RWPE1 (cell line): ENCODE measurements at regions of chr4 and their contacts with region 1.

Region 1: GRCh38 chr4:138775890-138776289 is 239.7 kb upstream of the NOCT start:
- DNase-seq: no peak
- H3K27ac ChIP-seq: no peak overlapping the region
- CTCF ChIP-seq: no peak

Region 2: DNA sequence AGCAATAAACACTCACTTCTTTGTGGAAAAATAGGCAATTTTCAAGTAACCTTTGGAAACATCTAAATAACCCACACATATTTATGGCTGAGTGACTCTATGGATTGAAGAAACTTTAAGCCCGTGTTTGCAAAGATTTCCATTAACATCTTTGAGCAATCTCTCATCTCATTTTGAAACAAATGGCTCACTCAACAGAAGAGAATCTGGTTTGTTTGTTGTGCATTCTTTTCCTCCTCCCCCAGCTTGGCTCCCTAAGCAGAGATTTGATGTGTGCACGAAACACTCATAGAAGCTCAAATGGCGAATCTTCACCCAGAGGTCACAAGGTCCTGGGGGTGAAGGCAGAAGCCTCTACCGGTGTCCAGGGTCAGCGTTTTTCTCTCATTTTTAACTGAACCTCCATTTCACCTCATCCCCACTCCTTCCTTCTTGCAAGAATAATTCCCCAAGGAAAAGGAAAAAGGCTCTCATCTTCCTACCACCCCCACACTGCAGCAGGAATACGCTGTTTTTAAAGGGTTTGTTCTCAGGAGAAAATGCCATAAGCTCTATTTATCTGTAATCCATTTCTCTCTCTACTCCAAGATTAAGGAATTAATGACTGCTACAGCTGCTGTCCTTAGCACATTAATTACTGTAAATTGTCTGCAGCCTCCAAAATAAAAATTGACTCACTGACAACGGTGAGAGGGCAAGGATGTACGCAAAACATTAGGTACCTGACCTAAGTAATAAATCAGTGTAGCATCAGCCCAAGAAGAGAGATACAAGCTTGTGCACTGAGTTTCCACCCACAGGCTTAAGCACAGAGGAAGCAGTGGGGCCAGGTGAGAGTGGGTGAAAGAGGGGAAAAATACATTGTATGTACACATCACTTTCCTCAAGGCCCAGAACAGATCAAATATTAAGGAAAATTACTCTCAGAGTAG is 67.9 kb before region 1 on chr4:
- CTCF ChIA-PET with region 1: no interaction called
- POLR2A ChIA-PET with region 1: no interaction called
- DNase-seq: no peak
- H3K27ac ChIP-seq: no peak overlapping the region
- CTCF ChIP-seq: no peak

Region 3: DNA sequence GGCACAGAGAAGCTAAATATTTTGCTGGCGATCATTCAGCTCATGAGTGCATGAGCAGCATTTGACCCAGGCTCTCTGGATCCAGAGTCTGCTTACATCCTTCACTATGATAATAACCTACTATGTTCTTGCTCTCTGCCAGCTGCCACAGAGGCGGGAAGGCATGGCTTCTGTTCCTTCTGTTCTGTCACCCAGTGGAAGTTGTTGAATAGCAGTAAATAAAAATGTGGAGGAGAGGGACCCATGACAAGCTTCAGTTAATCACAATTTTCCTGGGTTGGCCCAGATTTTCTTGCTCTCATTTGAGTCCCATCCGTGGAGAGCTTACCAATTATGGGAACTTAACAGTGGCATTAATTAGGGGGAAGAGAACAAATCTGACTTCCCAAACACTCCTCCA is 10.4 kb before region 1 on chr4:
- CTCF ChIA-PET with region 1: interaction called, 10 read pairs
- POLR2A ChIA-PET with region 1: no interaction called
- DNase-seq: no peak
- H3K27ac ChIP-seq: no peak overlapping the region
- CTCF ChIP-seq: no peak